ENCODE measurements at regions of chr14 and their contacts with region 1.

Region 1: DNA sequence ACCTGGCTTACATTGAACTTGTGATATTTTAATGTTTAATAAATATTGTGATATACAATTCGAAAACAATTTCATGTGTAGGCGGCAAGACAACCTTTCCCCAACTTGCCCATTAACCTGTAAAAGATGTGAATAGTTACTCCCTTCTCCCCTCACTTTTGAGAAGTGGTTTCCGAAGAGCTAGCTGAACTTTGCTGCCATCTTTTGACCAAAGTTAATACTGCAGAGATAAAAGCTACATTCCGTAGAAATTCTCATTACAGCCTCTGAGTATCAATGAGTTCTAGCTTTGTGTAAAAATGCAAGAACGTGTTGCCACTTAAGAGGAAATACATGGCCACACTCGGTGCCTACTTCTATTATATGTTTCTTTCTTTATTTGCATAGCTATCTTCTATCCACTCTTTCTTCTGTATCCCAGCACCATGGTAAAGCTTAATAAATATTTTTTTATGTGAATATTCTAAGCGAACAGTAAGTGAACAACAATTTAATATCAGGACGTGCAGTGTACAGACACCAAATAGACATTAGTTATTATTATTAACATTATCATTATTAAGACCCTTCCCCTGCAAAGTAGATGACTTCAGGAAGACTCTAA is 105.1 kb upstream of the TMEM260 start:
- DNase-seq: no peak
- ATAC-seq: no peak
- H3K4me3 ChIP-seq: no peak overlapping the region
- H3K27ac ChIP-seq: no peak overlapping the region
- H3K4me1 ChIP-seq: no peaks in the 10 kb centered on the region
- H3K27me3 ChIP-seq: peaks cover 0 to 8% (median 0%) of the 10 kb centered on the region in 9 donors
- CTCF ChIP-seq: peak; percentile 69 to 93 (median 82)
- POLR2A ChIP-seq: no peak

Region 2: GRCh38 chr14:55430024-55430690 is 1044.4 kb before region 1 on chr14:
- intact Hi-C with region 1: loop called in 4 of 10 experiments (anchors 5 to 10 kb)
- DNase-seq: peak in 2 of 5 donors; percentile 35 to 37
- ATAC-seq: peak; percentile 72 to 81 (median 74)
- H3K4me3 ChIP-seq: no peak overlapping the region
- H3K27ac ChIP-seq: no peak overlapping the region
- H3K4me1 ChIP-seq: peaks cover 0 to 2% (median 0%) of the 10 kb centered on the region in 12 donors
- H3K27me3 ChIP-seq: no peaks in the 10 kb centered on the region
- CTCF ChIP-seq: peak; percentile 17 to 56 (median 40)
- POLR2A ChIP-seq: no peak

Region 3: GRCh38 chr14:55446218-55446654 is 1028.3 kb before region 1 on chr14:
- intact Hi-C with region 1: loop called in 5 of 10 experiments (anchors 5 to 10 kb)
- DNase-seq: peak in 4 of 5 donors; percentile 40 to 62 (median 52)
- ATAC-seq: peak in 3 of 4 donors; percentile 67 to 70 (median 68)
- H3K4me3 ChIP-seq: no peak overlapping the region
- H3K27ac ChIP-seq: peak overlapping the region in 3 of 12 donors; percentile 30 to 57 (median 34)
- H3K4me1 ChIP-seq: peaks cover 0 to 22% (median 4%) of the 10 kb centered on the region in 12 donors
- H3K27me3 ChIP-seq: no peaks in the 10 kb centered on the region
- CTCF ChIP-seq: peak; percentile 56 to 72 (median 64)
- POLR2A ChIP-seq: no peak

Region 4: GRCh38 chr14:55707365-55707804 is 767.1 kb before region 1 on chr14:
- intact Hi-C with region 1: loop called (anchors 2 to 5 kb)
- DNase-seq: no peak
- ATAC-seq: peak in 2 of 4 donors; percentile 20 to 57
- H3K4me3 ChIP-seq: no peak overlapping the region
- H3K27ac ChIP-seq: no peak overlapping the region
- H3K4me1 ChIP-seq: peaks cover 0 to 10% (median 2%) of the 10 kb centered on the region in 12 donors
- H3K27me3 ChIP-seq: no peaks in the 10 kb centered on the region
- CTCF ChIP-seq: peak; percentile 42 to 79 (median 68)
- POLR2A ChIP-seq: no peak

Region 5: GRCh38 chr14:55904086-55904485 is 570.4 kb before region 1 on chr14:
- intact Hi-C with region 1: loop called in 1 of 10 experiments (anchors 10 kb)
- DNase-seq: no peak
- ATAC-seq: no peak
- H3K4me3 ChIP-seq: no peak overlapping the region
- H3K27ac ChIP-seq: no peak overlapping the region
- H3K4me1 ChIP-seq: no peaks in the 10 kb centered on the region
- H3K27me3 ChIP-seq: peaks cover 0 to 4% (median 0%) of the 10 kb centered on the region in 9 donors
- CTCF ChIP-seq: no peak
- POLR2A ChIP-seq: no peak